B cell (primary cell): ENCODE measurements at regions of chr17 and their contacts with region 1.

Region 1: DNA sequence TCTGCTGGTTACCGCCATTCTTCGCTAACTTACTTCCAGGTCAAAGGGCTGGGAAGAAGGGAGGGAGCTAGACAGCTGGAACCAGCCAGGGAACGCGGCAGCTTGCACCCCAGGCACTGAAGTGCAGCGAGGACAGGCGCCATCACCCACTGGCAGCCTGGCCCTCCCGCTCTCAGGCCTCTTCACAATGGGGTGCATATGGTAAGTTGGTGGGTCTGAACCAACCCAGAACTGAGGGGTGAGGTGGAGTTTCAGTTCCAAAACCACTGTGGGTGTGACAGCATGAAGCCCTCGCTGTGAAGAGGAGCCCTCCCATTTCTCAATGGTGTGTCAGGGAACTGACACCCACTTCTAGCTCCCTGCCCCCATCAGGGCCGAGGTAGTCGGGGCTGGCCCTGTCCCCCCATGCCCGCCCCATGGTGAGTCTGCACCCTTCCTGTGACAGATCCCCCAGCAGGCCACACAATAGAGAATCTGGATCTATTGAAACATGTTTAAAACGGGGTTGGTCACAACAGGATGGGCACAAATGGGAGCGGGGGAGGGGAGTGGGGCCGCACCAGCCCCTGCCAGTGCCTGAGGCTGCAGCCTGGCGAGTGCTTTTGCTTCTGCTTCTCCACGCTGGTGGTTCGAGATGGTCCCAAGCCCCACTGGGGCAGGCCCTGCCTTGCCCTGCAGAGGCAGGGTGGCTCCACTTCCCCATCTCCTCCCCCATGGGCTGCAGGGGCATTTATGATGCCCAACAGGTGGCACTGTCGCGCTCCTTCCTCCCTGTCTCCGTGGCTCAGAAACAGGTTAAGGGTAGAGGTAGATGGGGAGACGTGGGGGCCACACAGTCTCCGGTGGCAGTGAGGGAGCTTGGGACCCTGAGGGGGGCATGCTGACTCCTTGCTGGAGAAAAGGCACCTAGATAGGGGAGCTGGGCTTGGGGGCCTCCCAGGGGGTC is 2.3 kb downstream of the LIMD2 start:
- DNase-seq: peak; percentile 96
- ATAC-seq: peak; percentile 39
- H3K4me3 ChIP-seq: peak overlapping the region; percentile 70 to 100 (median 96)
- H3K4me3 Mint-ChIP-seq: peak overlapping the region; percentile 94
- H3K27ac ChIP-seq: peak overlapping the region; percentile 82 to 95
- H3K27ac Mint-ChIP-seq: peak overlapping the region; percentile 98
- H3K4me1 ChIP-seq: peaks cover 54 to 66% of the 10 kb centered on the region in 2 donors
- H3K4me1 Mint-ChIP-seq: peaks cover 66% of the 10 kb centered on the region
- H3K27me3 ChIP-seq: no peaks in the 10 kb centered on the region
- H3K27me3 Mint-ChIP-seq: no peaks in the 10 kb centered on the region
- CTCF ChIP-seq: peak; percentile 85

Region 2: DNA sequence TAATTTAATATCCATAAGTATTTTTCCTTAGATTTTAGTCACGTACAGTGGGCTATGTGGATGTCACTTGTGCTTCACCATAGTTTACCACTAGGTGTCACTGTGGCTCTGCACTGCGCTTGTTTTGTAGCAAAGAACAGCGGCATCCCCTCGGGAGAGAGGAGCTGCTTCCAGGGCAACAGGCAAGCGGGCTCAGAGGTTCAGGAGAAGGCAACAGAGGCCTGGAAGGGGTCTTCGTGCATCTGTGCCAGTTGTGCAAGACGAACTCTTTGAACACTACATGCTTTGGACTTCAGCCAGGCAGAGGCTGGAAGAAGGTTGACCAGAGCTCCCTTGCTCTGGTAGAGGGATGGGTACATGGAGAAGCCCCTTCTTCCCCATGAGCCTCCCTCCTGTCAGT is 272.1 kb before region 1 on chr17:
- CTCF ChIA-PET with region 1: interaction called, 19 read pairs
- POLR2A ChIA-PET with region 1: no interaction called
- intact Hi-C with region 1: loop called (anchors 5 kb)
- DNase-seq: peak; percentile 82
- ATAC-seq: peak; percentile 81
- H3K4me3 ChIP-seq: no peak overlapping the region
- H3K4me3 Mint-ChIP-seq: no peak overlapping the region
- H3K27ac ChIP-seq: no peak overlapping the region
- H3K27ac Mint-ChIP-seq: no peak overlapping the region
- H3K4me1 ChIP-seq: peaks cover 0 to 5% of the 10 kb centered on the region in 2 donors
- H3K4me1 Mint-ChIP-seq: peaks cover 12% of the 10 kb centered on the region
- H3K27me3 ChIP-seq: no peaks in the 10 kb centered on the region
- H3K27me3 Mint-ChIP-seq: peaks cover 10% of the 10 kb centered on the region
- CTCF ChIP-seq: peak; percentile 100

Region 3: DNA sequence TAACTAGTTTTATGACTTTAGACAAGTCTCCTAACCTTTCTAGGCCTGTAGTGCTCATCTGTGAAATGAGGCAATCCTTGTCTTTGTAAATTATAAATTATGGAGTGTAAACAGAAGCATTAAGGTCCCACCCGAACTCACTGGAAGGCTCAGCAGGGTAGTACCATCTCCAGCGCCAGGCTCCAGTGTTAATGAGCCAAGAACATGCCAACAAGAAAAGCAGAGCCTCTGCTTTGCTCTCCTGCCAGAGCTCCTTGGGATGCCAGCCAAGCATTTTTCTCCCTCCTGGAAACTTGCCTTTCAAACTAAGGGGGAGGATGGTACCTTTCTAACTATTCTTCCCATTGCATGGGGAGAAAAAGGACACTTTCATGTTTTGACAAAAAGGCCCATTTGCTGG is 12.6 kb before region 1 on chr17:
- CTCF ChIA-PET with region 1: interaction called, 3 read pairs
- POLR2A ChIA-PET with region 1: interaction called, 11 read pairs
- intact Hi-C with region 1: no loop called
- DNase-seq: no peak
- ATAC-seq: no peak
- H3K4me3 ChIP-seq: no peak overlapping the region
- H3K4me3 Mint-ChIP-seq: no peak overlapping the region
- H3K27ac ChIP-seq: no peak overlapping the region
- H3K27ac Mint-ChIP-seq: no peak overlapping the region
- H3K4me1 ChIP-seq: no peaks in the 10 kb centered on the region
- H3K4me1 Mint-ChIP-seq: no peaks in the 10 kb centered on the region
- H3K27me3 ChIP-seq: no peaks in the 10 kb centered on the region
- H3K27me3 Mint-ChIP-seq: no peaks in the 10 kb centered on the region
- CTCF ChIP-seq: no peak

Region 4: GRCh38 chr17:63722403-63722802 is 24.8 kb after region 1 on chr17:
- CTCF ChIA-PET with region 1: no interaction called
- POLR2A ChIA-PET with region 1: no interaction called
- intact Hi-C with region 1: no loop called
- DNase-seq: no peak
- ATAC-seq: no peak
- H3K4me3 ChIP-seq: no peak overlapping the region
- H3K4me3 Mint-ChIP-seq: no peak overlapping the region
- H3K27ac ChIP-seq: no peak overlapping the region
- H3K27ac Mint-ChIP-seq: no peak overlapping the region
- H3K4me1 ChIP-seq: no peaks in the 10 kb centered on the region
- H3K4me1 Mint-ChIP-seq: no peaks in the 10 kb centered on the region
- H3K27me3 ChIP-seq: no peaks in the 10 kb centered on the region
- H3K27me3 Mint-ChIP-seq: no peaks in the 10 kb centered on the region
- CTCF ChIP-seq: no peak

Region 5: GRCh38 chr17:63741221-63742049 is 43.8 kb after region 1 on chr17 and contains the start of gene STRADA:
- CTCF ChIA-PET with region 1: interaction called, 26 read pairs
- POLR2A ChIA-PET with region 1: interaction called, 86 read pairs
- intact Hi-C with region 1: loop called (anchors 1 kb)
- DNase-seq: peak; percentile 99
- ATAC-seq: peak; percentile 89
- H3K4me3 ChIP-seq: peak within 1 kb of the TSS; percentile 85 to 99 (median 93)
- H3K4me3 Mint-ChIP-seq: peak within 1 kb of the TSS; percentile 89
- H3K27ac ChIP-seq: peak within 1 kb of the TSS; percentile 97
- H3K27ac Mint-ChIP-seq: peak within 1 kb of the TSS; percentile 93
- H3K4me1 ChIP-seq: peaks cover 15 to 28% of the 10 kb centered on the region in 2 donors
- H3K4me1 Mint-ChIP-seq: peaks cover 28% of the 10 kb centered on the region
- H3K27me3 ChIP-seq: no peaks in the 10 kb centered on the region
- H3K27me3 Mint-ChIP-seq: no peaks in the 10 kb centered on the region
- CTCF ChIP-seq: no peak
- total RNA-seq, gene STRADA: 87.4 and 93.2 TPM in 2 replicates

Region 6: DNA sequence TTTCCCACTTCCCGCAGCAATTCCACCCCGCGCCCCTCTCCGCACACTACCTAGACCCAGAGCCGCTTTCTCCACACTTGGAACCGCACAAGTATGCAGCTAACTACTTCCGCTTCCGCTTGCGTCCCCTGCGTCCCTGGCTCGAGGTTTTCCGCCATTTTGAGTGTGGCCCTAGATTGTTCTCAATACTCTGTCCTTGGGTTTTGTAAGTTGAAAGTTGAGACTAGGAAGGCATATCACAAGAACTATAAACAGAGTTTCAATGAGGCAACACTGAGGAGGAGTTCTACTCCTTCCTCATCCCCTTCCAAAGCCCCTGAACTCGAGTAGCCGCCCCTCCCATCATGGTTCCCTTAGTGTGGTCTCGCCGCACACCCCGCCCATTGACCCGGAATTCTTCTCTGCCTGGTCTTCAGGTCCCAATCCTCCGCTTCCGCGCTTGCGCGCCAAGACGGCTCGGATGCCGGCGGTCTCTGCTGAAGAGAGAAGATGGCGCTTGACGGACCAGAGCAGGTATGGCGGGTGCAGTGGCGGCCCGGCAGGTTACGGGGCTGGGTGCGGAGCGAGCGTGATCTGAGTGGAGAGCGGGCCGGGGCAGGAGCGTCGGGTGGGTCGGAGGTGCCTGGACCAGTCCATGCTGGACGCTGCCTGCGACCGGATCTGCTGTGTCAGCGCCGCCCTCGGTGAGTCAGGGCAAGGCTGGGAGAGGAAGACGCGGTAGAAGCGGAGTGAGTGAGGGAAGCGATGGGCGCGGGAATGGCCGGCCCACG is 129.6 kb after region 1 on chr17 and contains the starts of genes FTSJ3 and PSMC5:
- CTCF ChIA-PET with region 1: interaction called, 4 read pairs
- POLR2A ChIA-PET with region 1: interaction called, 6 read pairs
- intact Hi-C with region 1: loop called (anchors 1 kb)
- DNase-seq: peak; percentile 98
- ATAC-seq: peak; percentile 95
- H3K4me3 ChIP-seq: peak within 1 kb of the TSS; percentile 78 to 92 (median 81)
- H3K4me3 Mint-ChIP-seq: peak within 1 kb of the TSS; percentile 98
- H3K27ac ChIP-seq: peak within 1 kb of the TSS; percentile 70 to 92
- H3K27ac Mint-ChIP-seq: peak within 1 kb of the TSS; percentile 98
- H3K4me1 ChIP-seq: peaks cover 38 to 53% of the 10 kb centered on the region in 2 donors
- H3K4me1 Mint-ChIP-seq: peaks cover 73% of the 10 kb centered on the region
- H3K27me3 ChIP-seq: no peaks in the 10 kb centered on the region
- H3K27me3 Mint-ChIP-seq: no peaks in the 10 kb centered on the region
- CTCF ChIP-seq: peak; percentile 72
- total RNA-seq, gene FTSJ3: 75.9 and 78.2 TPM in 2 replicates
- total RNA-seq, gene PSMC5: 84.7 and 87.1 TPM in 2 replicates

Region 7: DNA sequence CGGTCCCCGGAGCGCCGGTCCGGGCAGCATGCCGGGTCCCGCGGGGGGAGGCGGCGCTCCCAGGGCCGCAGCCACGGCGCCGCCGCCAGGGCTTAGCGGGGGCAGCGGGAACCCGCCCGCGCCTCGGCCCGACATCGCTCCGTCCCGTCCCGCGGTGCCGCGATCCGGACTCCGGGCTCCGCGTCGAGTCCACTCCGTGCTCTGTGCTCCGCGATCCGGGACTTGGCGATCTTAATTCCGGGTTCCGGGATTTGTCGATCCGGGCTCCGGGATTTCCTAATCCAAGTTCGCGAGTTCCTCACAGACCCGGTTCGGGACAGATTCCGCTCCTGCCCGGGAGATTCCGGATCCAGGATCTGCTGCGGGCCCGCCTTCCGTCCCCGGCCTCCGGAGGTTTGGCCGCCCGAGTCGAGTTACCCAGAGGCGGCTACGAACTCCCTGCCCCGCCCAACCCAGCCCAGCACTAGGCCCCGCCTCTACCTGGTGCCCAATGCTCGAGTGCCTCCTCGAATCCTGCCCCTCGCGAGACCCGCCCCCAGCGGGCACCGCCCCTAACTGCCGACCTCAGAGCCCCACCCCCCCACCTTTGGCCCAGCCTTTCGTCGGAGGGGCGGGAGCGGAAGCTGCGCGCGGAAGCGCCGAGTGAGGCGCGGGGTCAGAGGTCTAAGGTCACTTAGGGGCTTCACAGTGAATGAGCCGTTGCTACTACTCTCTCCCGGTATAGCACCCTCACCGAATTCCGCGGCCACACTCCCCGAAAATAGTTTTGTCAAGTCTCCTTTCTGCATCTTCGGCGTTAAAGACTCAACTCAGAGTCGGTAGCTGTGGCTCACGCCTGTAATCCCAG is 145.1 kb after region 1 on chr17 and contains the start of gene SMARCD2:
- CTCF ChIA-PET with region 1: no interaction called
- POLR2A ChIA-PET with region 1: interaction called, 9 read pairs
- intact Hi-C with region 1: loop called (anchors 1 kb)
- DNase-seq: peak; percentile 99
- ATAC-seq: peak; percentile 93
- H3K4me3 ChIP-seq: peak within 1 kb of the TSS; percentile 65 to 92 (median 89)
- H3K4me3 Mint-ChIP-seq: peak within 1 kb of the TSS; percentile 94
- H3K27ac ChIP-seq: peak within 1 kb of the TSS; percentile 90 to 92
- H3K27ac Mint-ChIP-seq: peak within 1 kb of the TSS; percentile 94
- H3K4me1 ChIP-seq: peaks cover 35 to 51% of the 10 kb centered on the region in 2 donors
- H3K4me1 Mint-ChIP-seq: peaks cover 43% of the 10 kb centered on the region
- H3K27me3 ChIP-seq: no peaks in the 10 kb centered on the region
- H3K27me3 Mint-ChIP-seq: no peaks in the 10 kb centered on the region
- CTCF ChIP-seq: no peak
- total RNA-seq, gene SMARCD2: 124 and 125 TPM in 2 replicates